ENCODE measurements at regions of chr10 and their contacts with region 1.

Region 1: GRCh38 chr10:119650692-119651513 is at the start of gene BAG3:
- DNase-seq: peak; percentile 80 to 90 (median 84)
- ATAC-seq: peak; percentile 88
- H3K4me3 ChIP-seq: peak within 1 kb of the TSS; percentile 89
- H3K27ac ChIP-seq: peak within 1 kb of the TSS; percentile 96
- H3K4me1 ChIP-seq: peaks cover 9 to 24% of the 10 kb centered on the region in 2 experiments; a peak in 4 of 5 replicates
- H3K27me3 ChIP-seq: no peaks in the 10 kb centered on the region
- CTCF ChIP-seq: no peak
- EP300 ChIP-seq: peak; percentile 44; the same call in 1 of the 2 replicates
- POLR2A ChIP-seq: peak; percentile 86
- RAD21 ChIP-seq: no peak
- polyA plus RNA-seq, gene BAG3: 3.9 to 4.1 TPM

Region 2: GRCh38 chr10:119616882-119617570 is 33.9 kb before region 1 on chr10:
- CTCF ChIA-PET with region 1: no interaction called
- POLR2A ChIA-PET with region 1: no interaction called
- in situ Hi-C with region 1: no loop called
- intact Hi-C with region 1: loop called (anchors 1 kb)
- DNase-seq: peak; percentile 49 to 75 (median 51)
- ATAC-seq: peak; percentile 94
- H3K4me3 ChIP-seq: peak overlapping the region; percentile 28
- H3K27ac ChIP-seq: peak overlapping the region; percentile 60
- H3K4me1 ChIP-seq: peaks cover 0 to 8% of the 10 kb centered on the region in 2 experiments; a peak in 3 of 5 replicates
- H3K27me3 ChIP-seq: no peaks in the 10 kb centered on the region
- CTCF ChIP-seq: peak; percentile 74 to 82 (median 75)
- EP300 ChIP-seq: no peak
- POLR2A ChIP-seq: 0 out of 2 replicates have a peak, but pooled peaks have one; percentile 38
- RAD21 ChIP-seq: peak; percentile 55 to 63

Region 3: GRCh38 chr10:119663866-119664616 is 13.1 kb after region 1 on chr10:
- CTCF ChIA-PET with region 1: no interaction called
- POLR2A ChIA-PET with region 1: interaction called, 11 read pairs
- in situ Hi-C with region 1: no loop called
- intact Hi-C with region 1: no loop called
- DNase-seq: peak in 2 of 4 experiments; percentile 38 to 41
- ATAC-seq: peak; percentile 50
- H3K4me3 ChIP-seq: no peak overlapping the region
- H3K27ac ChIP-seq: peak overlapping the region; percentile 21; the same call in 1 of the 3 replicates
- H3K4me1 ChIP-seq: peaks cover 21 to 33% of the 10 kb centered on the region in 2 experiments; a peak in 4 of 5 replicates
- H3K27me3 ChIP-seq: no peaks in the 10 kb centered on the region
- CTCF ChIP-seq: no peak
- EP300 ChIP-seq: no peak
- POLR2A ChIP-seq: no peak
- RAD21 ChIP-seq: no peak

Region 4: DNA sequence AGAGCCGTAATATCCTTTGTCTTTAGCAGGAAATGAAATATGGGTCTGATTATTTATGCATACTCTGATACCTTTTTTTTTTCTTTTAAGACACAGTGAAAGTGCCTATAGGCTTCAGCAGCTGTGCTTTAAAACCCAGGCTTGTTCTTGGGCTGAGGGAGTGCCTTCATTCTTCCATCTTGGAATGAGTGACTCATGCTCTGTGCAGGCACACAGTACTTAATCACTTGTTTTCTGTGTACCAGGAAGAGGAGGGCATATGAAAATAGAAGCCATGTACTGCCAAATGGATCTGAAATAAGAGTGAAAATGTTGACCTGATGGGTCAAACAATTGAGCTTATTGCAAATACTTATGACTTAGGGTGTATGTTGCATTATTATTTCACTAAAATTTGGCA is 86.9 kb after region 1 on chr10:
- CTCF ChIA-PET with region 1: no interaction called
- POLR2A ChIA-PET with region 1: no interaction called
- in situ Hi-C with region 1: no loop called
- intact Hi-C with region 1: no loop called
- DNase-seq: peak; percentile 24 to 51 (median 30)
- ATAC-seq: peak; percentile 86
- H3K4me3 ChIP-seq: no peak overlapping the region
- H3K27ac ChIP-seq: no peak overlapping the region
- H3K4me1 ChIP-seq: peaks cover 0 to 11% of the 10 kb centered on the region in 2 experiments; a peak in 3 of 5 replicates
- H3K27me3 ChIP-seq: no peaks in the 10 kb centered on the region
- CTCF ChIP-seq: no peak
- EP300 ChIP-seq: no peak
- POLR2A ChIP-seq: no peak
- RAD21 ChIP-seq: no peak

Measured in K562 (cell line).